Activated CD4-positive, alpha-beta T cell treated with anti-CD3 and anti-CD28 coated beads, Interleukin-2, amount 10 ng/mL, durations not matched to agents 7 days and 5 days (primary cell): ENCODE measurements at regions of chr16 and their contacts with region 1.

Region 1: GRCh38 chr16:30778549-30779244 is 8.3 kb downstream of the ZNF629 start:
- DNase-seq: no peak
- H3K4me3 Mint-ChIP-seq: no peak overlapping the region
- H3K27ac Mint-ChIP-seq: no peak overlapping the region
- H3K4me1 Mint-ChIP-seq: peaks cover 19% of the 10 kb centered on the region
- H3K27me3 Mint-ChIP-seq: no peaks in the 10 kb centered on the region

Region 2: DNA sequence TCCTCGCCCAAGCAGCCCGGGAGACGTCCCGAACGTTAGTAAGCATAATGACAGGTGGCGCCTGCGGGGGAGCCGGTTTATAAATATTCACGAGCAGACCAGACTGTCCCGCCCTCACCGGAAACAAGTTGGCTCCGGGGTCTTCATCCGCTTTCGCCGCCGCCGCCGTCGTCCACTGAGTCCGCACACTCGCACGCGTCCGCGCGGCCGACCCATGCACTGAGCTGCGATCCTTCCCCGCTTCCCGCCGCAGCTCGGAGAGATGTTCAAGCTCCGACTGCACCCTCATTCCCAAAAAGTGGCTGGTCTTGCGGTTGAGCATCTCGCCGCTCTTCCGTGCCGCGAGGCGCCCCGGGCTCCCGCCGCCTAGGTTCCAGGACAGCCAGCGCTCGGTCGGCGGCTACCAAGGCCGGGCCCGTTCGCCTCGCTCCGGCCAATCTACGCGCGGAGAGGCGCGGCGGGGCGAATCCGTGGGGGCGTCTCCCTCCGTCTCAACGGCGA is 17.2 kb before region 1 on chr16:
- CTCF ChIA-PET with region 1: no interaction called
- POLR2A ChIA-PET with region 1: no interaction called
- DNase-seq: peak; percentile 39
- H3K4me3 Mint-ChIP-seq: peak overlapping the region; percentile 98
- H3K27ac Mint-ChIP-seq: peak overlapping the region; percentile 93
- H3K4me1 Mint-ChIP-seq: peaks cover 32% of the 10 kb centered on the region
- H3K27me3 Mint-ChIP-seq: no peaks in the 10 kb centered on the region

Region 3: GRCh38 chr16:30813821-30814189 is 35.1 kb after region 1 on chr16:
- CTCF ChIA-PET with region 1: interaction called, 15 read pairs
- POLR2A ChIA-PET with region 1: no interaction called
- DNase-seq: no peak
- H3K4me3 Mint-ChIP-seq: peak overlapping the region; percentile 87
- H3K27ac Mint-ChIP-seq: peak overlapping the region; percentile 91
- H3K4me1 Mint-ChIP-seq: peaks cover 14% of the 10 kb centered on the region
- H3K27me3 Mint-ChIP-seq: no peaks in the 10 kb centered on the region